AG04450 (cell line): ENCODE measurements at regions of chr14 and their contacts with region 1.

Region 1: GRCh38 chr14:55051426-55052268 is at the start of gene MAPK1IP1L:
- DNase-seq: peak; percentile 70
- H3K4me3 ChIP-seq: peak within 1 kb of the TSS; percentile 99
- H3K27ac ChIP-seq: peak within 1 kb of the TSS; percentile 99
- H3K27me3 ChIP-seq: no peaks in the 10 kb centered on the region
- CTCF ChIP-seq: peak; percentile 88
- polyA plus RNA-seq, gene MAPK1IP1L: 65.3 and 86.7 TPM in 2 replicates

Region 2: DNA sequence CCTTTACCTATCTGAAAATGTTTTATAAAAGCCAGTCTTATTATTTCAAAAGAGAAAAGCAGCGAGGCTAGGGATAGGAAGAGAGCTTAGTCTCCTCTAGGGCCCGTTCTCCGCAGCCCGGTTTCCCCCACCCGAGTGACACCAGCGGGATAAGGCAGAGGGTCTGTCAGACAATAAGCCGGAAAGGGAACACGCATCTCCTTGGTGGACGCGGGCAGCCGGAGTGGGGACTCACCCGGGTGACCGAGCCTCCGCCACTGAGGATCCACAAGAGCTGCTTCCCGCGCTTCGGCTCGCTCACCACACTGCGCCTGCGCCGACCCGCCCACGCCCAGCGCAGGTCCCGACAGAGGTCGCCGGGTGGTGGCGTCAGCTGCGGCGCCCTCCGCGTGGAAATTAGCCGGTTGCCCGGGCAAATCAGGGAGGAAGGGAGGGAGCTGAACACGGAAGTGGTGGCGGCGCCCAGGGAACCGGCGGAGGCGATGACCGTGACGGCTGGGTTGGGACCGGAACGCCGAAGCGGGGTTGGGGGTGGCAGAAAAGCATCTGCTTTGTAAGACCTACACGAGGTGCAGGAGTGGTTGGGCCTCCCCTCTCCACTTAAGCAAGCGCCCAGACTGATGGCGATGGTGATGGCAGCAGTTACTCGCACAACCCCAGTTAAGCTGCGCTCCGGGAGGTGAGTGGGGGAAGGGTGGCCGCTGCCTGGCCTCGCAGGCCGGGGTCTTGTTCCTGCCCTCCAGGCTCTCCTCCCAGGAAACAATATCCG is 24.7 kb before region 1 on chr14 and contains the starts of genes SOCS4 and WDHD1:
- CTCF ChIA-PET with region 1: interaction called, 24 read pairs
- POLR2A ChIA-PET with region 1: interaction called, 13 read pairs
- DNase-seq: peak; percentile 63
- H3K4me3 ChIP-seq: peak within 1 kb of the TSS; percentile 87
- H3K27ac ChIP-seq: peak within 1 kb of the TSS; percentile 76
- H3K27me3 ChIP-seq: no peaks in the 10 kb centered on the region
- CTCF ChIP-seq: no peak; the same call in 1 of the 2 replicates
- polyA plus RNA-seq, gene SOCS4: 8.1 and 11.1 TPM in 2 replicates
- polyA plus RNA-seq, gene WDHD1: 4.2 and 6.7 TPM in 2 replicates

Region 3: GRCh38 chr14:55038708-55039107 is 12.9 kb before region 1 on chr14:
- CTCF ChIA-PET with region 1: interaction called, 27 read pairs
- POLR2A ChIA-PET with region 1: interaction called, 6 read pairs
- DNase-seq: no peak
- H3K4me3 ChIP-seq: no peak overlapping the region
- H3K27ac ChIP-seq: no peak overlapping the region
- H3K27me3 ChIP-seq: no peaks in the 10 kb centered on the region
- CTCF ChIP-seq: no peak

Region 4: DNA sequence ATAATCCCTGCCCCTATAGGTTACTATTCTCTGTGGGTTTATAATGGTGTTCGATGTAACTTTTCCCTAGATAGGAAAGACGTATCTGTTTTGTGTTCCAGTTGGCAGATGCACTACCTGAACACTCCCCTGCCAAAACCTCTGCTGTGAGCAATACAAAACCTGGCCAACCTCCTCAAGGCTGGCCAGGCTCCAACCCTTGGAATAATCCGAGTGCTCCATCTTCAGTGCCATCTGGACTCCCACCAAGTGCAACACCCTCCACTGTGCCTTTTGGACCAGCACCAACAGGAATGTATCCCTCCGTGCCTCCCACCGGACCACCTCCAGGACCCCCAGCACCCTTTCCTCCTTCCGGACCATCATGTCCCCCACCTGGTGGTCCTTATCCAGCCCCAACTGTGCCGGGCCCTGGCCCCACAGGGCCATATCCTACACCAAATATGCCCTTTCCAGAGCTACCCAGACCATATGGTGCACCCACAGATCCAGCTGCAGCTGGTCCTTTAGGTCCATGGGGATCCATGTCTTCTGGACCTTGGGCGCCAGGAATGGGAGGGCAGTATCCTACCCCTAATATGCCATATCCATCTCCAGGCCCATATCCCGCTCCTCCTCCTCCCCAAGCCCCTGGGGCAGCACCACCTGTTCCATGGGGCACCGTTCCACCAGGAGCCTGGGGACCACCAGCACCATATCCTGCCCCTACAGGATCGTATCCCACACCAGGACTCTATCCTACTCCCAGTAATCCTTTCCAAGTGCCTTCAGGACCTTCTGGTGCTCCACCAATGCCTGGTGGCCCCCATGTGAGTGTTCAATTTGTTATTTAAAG is 11.1 kb after region 1 on chr14:
- CTCF ChIA-PET with region 1: interaction called, 24 read pairs
- POLR2A ChIA-PET with region 1: interaction called, 9 read pairs
- DNase-seq: no peak
- H3K4me3 ChIP-seq: no peak overlapping the region
- H3K27ac ChIP-seq: no peak overlapping the region
- H3K27me3 ChIP-seq: no peaks in the 10 kb centered on the region
- CTCF ChIP-seq: no peak

Region 5: DNA sequence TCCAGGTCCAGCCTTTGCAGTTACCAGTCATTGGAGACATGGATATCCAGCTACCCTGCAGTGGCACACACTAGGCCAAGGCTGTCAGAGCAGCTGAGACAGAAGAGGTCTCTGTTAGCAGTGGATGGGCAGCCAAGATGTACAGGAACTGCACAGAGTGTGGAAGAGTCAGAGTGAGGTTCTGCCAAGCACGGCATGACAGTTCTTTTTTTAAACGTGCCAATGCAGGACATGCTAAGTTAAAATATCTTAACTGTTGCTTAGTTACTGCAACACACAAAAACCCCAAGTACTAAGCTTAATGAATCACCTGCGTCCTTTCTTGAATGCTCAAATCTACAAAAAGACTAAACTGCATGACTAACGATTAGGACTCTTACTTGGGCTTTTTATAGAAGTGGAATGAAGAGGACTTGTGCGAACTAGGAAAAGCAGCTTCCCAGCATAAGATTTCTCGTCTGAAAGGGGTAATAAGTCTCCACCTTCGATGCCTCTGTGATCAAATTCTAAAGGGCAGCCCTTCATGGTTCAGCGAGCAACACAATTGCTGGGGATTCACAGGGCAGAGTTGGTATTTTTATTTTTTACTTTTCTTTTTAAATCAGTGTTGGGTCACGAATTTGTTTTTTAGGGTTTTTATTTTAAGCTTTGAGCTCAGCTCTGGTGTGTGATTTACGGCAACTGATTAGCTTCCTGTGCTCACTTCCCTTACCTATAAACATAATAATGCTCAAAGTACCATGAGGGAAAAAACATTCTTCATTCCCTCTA is 20.4 kb after region 1 on chr14:
- CTCF ChIA-PET with region 1: interaction called, 30 read pairs
- POLR2A ChIA-PET with region 1: interaction called, 7 read pairs
- DNase-seq: no peak
- H3K4me3 ChIP-seq: no peak overlapping the region
- H3K27ac ChIP-seq: peak overlapping the region; percentile 66
- H3K27me3 ChIP-seq: no peaks in the 10 kb centered on the region
- CTCF ChIP-seq: no peak

Region 6: GRCh38 chr14:55152052-55152753 is 100.6 kb after region 1 on chr14:
- CTCF ChIA-PET with region 1: interaction called, 13 read pairs
- POLR2A ChIA-PET with region 1: no interaction called
- DNase-seq: no peak
- H3K4me3 ChIP-seq: no peak overlapping the region
- H3K27ac ChIP-seq: peak overlapping the region; percentile 65
- H3K27me3 ChIP-seq: no peaks in the 10 kb centered on the region
- CTCF ChIP-seq: no peak

Region 7: DNA sequence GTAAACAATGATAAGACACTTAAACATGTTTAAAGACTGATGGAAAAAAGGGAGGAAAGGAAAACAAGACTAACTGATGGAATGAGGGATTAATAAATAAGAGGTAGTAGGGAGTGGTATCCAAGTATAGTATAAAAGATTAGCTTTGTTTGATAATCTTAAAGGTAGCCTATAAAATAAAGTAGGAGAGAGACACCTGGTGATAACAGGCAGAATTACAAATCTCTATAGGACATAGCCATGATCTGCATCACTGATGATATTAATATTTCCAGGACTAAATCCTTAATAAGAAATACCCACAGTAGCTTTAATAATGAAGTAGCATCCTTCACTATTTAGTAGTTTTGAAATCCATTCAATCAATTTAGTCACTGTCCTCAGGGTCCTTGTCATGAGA is 109.3 kb after region 1 on chr14:
- CTCF ChIA-PET with region 1: interaction called, 25 read pairs
- POLR2A ChIA-PET with region 1: interaction called, 7 read pairs
- DNase-seq: no peak
- H3K4me3 ChIP-seq: no peak overlapping the region
- H3K27ac ChIP-seq: no peak overlapping the region
- H3K27me3 ChIP-seq: no peaks in the 10 kb centered on the region
- CTCF ChIP-seq: peak; percentile 64

Region 8: DNA sequence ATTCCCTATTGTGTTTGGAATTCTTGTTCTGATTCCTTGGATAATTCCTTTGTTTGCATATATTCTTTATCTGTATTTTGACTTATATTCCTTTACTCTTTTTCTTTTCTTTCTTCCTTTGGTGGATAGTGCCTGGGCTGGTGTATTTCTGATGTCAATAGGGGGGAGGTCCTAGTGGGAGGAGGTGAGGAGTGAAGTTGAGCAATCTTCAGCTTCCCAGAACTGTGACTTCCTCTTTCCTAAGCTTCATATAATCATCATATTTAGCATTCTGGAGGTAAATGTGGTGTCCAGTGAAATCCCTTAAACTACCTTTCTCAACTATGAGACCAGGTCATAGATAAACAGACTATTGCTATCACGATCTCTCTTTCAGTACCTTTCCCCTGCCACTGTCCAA is 418.4 kb after region 1 on chr14:
- CTCF ChIA-PET with region 1: no interaction called
- POLR2A ChIA-PET with region 1: no interaction called
- DNase-seq: no peak
- H3K4me3 ChIP-seq: no peak overlapping the region
- H3K27ac ChIP-seq: no peak overlapping the region
- H3K27me3 ChIP-seq: peaks cover 27% of the 10 kb centered on the region
- CTCF ChIP-seq: no peak